Colonic mucosa (tissue), 4 donors: ENCODE measurements at regions of chr5 and their contacts with region 1.

Region 1: GRCh38 chr5:149618581-149619251 is 37.4 kb downstream of the ARHGEF37 start:
- DNase-seq: peak; percentile 61
- H3K4me3 ChIP-seq: no peak overlapping the region
- H3K27ac ChIP-seq: no peak overlapping the region
- H3K4me1 ChIP-seq: no peaks in the 10 kb centered on the region
- H3K27me3 ChIP-seq: no peaks in the 10 kb centered on the region
- CTCF ChIP-seq: peak; percentile 56

Region 2: GRCh38 chr5:149381987-149382340 is 236.8 kb before region 1 on chr5:
- intact Hi-C with region 1: loop called (anchors 5 kb)
- DNase-seq: peak; percentile 81
- H3K4me3 ChIP-seq: no peak overlapping the region
- H3K27ac ChIP-seq: peak overlapping the region; percentile 41
- H3K4me1 ChIP-seq: no peaks in the 10 kb centered on the region
- H3K27me3 ChIP-seq: no peaks in the 10 kb centered on the region
- CTCF ChIP-seq: peak; percentile 83

Region 3: GRCh38 chr5:149442563-149443182 is 176.0 kb before region 1 on chr5:
- intact Hi-C with region 1: loop called (anchors 5 kb)
- DNase-seq: peak; percentile 89
- H3K4me3 ChIP-seq: no peak overlapping the region
- H3K27ac ChIP-seq: peak overlapping the region; percentile 45
- H3K4me1 ChIP-seq: no peaks in the 10 kb centered on the region
- H3K27me3 ChIP-seq: no peaks in the 10 kb centered on the region
- CTCF ChIP-seq: peak; percentile 91

Region 4: DNA sequence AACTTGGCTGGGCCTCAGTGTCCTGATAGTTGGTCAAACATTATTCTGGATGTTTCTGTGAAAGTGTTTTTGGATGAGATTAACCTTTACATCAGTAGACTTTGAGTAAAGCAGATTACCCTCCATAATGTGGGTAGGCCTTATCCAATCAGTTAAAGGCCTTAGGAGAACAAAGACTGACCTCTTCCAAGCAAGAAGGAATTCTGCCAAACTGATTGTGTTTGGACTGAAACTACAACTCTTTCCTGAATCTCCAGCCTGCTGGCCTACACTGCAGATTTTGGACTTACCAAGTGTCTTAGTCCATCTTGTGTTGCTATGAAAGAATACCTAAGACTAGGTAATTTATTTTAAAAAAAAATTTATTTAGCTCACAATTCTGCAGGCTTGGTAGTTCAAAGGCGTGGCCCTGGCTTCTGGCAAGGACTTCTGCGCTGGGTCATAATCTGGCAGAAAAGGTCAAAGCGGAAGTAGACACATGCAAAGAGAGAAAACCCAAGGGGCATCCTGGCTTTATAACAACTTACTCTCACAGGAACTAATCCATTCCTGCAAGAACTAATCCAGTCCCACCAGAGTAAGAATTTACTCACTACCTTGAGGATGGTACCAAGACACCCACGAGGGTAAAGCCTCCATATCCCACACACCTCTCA is 46.0 kb before region 1 on chr5:
- intact Hi-C with region 1: loop called (anchors 5 kb)
- DNase-seq: peak; percentile 44
- H3K4me3 ChIP-seq: no peak overlapping the region
- H3K27ac ChIP-seq: peak overlapping the region; percentile 8
- H3K4me1 ChIP-seq: no peaks in the 10 kb centered on the region
- H3K27me3 ChIP-seq: no peaks in the 10 kb centered on the region
- CTCF ChIP-seq: no peak

Region 5: GRCh38 chr5:149887622-149888183 is 269.0 kb after region 1 on chr5:
- intact Hi-C with region 1: no loop called
- DNase-seq: no peak
- H3K4me3 ChIP-seq: no peak overlapping the region
- H3K27ac ChIP-seq: no peak overlapping the region
- H3K4me1 ChIP-seq: peaks cover 8% of the 10 kb centered on the region
- H3K27me3 ChIP-seq: no peaks in the 10 kb centered on the region
- CTCF ChIP-seq: no peak